PC-9 (cell line): ENCODE measurements at regions of chr1 and their contacts with region 1.

Region 1: DNA sequence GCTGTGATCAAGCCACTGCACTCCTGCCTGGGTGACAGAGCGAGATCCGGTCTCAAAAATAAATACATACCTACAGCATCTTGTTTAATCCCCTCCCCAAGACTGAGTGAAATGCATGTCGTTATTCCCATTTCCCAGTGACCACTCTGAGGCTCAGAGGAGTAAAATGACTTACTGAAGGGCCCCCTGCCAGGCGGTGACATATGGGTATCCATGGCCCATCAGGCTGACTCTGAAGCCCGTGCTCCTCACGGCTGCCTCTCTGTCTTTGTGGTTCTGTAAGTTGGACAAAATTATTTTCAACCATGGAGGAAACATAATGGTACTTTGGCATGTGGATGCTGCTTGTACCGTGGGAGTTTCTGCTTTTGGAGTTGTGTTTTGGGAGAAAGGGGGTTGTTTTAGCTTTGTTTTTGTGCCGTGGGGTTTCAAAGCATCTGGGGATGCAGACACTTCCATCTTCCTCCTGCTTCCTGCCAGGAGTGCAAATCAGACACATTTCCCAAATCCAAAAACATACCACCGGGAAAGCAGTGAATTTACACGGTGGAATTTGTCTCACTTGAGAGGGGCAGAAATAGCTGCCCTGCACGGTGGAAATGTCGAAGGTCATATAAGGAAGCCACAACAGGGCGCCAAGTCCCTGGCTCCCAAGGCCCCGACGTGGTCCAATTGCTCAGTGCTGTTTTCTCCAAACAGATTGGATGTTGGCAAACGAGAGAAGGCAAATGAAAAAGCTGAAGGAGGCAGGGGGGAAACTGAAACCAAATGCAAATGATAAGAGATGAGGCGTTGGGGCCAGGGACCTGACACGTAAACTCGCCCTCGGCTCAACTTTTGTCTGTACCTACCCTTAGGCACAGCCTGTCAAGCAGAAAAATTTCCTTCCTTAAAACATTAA is 17.1 kb upstream of the PINK1 start:
- DNase-seq: no peak
- H3K4me3 ChIP-seq: no peak overlapping the region
- H3K27ac ChIP-seq: no peak overlapping the region
- H3K4me1 ChIP-seq: peaks cover 29% of the 10 kb centered on the region
- H3K27me3 ChIP-seq: no peaks in the 10 kb centered on the region
- CTCF ChIP-seq: no peak

Region 2: GRCh38 chr1:20361806-20362640 is 254.2 kb before region 1 on chr1:
- CTCF ChIA-PET with region 1: no interaction called
- POLR2A ChIA-PET with region 1: interaction called, 14 read pairs
- intact Hi-C with region 1: no loop called
- DNase-seq: peak in 1 of 2 experiments; percentile 80
- H3K4me3 ChIP-seq: no peak overlapping the region
- H3K27ac ChIP-seq: no peak overlapping the region
- H3K4me1 ChIP-seq: peaks cover 41% of the 10 kb centered on the region
- H3K27me3 ChIP-seq: no peaks in the 10 kb centered on the region
- CTCF ChIP-seq: peak; percentile 90

Region 3: DNA sequence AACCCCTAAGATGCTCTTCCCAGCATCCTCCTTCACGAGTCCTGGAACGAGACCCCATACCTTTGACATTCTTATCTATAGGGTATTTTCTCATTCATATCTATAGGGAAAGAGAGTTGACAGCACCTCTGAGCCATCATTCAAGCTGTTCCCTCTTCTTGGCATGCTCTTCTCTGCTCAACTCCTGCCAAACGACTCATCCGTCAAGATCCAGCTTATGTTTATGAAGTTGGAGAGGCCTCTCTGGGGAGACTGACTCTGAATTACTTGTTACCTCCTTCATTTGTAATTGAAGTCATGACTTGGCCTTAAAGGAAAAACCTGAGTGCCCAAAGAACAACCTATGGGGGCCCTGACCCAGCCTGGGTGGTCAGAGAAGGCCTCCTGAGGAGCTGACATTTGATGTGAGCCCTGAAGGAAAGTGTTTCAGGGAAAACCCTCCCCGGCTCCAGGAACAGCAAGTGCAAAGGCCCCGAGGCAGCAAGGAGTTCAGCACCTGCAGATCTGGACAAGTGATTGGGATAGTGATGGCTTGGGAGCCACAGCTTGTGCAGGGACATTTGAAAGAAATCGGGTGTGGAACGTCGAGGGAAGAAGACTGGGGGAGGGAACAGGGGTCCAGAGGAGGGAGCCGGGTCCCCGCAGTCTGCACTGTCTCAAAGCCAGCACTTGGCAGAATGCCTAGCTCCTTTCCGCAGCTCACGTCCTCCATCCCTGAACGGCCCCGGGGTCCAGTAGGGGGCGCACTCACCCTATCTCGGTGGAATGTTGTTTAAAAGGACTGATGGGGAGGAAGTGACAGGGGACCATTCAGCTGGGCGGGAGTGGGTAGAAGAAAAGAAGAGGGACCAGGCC is 41.3 kb before region 1 on chr1:
- CTCF ChIA-PET with region 1: interaction called, 4 read pairs
- POLR2A ChIA-PET with region 1: no interaction called
- intact Hi-C with region 1: loop called (anchors 5 kb)
- DNase-seq: no peak
- H3K4me3 ChIP-seq: no peak overlapping the region
- H3K27ac ChIP-seq: no peak overlapping the region
- H3K4me1 ChIP-seq: peaks cover 34% of the 10 kb centered on the region
- H3K27me3 ChIP-seq: no peaks in the 10 kb centered on the region
- CTCF ChIP-seq: peak; percentile 26; the same call in 1 of the 2 replicates

Region 4: DNA sequence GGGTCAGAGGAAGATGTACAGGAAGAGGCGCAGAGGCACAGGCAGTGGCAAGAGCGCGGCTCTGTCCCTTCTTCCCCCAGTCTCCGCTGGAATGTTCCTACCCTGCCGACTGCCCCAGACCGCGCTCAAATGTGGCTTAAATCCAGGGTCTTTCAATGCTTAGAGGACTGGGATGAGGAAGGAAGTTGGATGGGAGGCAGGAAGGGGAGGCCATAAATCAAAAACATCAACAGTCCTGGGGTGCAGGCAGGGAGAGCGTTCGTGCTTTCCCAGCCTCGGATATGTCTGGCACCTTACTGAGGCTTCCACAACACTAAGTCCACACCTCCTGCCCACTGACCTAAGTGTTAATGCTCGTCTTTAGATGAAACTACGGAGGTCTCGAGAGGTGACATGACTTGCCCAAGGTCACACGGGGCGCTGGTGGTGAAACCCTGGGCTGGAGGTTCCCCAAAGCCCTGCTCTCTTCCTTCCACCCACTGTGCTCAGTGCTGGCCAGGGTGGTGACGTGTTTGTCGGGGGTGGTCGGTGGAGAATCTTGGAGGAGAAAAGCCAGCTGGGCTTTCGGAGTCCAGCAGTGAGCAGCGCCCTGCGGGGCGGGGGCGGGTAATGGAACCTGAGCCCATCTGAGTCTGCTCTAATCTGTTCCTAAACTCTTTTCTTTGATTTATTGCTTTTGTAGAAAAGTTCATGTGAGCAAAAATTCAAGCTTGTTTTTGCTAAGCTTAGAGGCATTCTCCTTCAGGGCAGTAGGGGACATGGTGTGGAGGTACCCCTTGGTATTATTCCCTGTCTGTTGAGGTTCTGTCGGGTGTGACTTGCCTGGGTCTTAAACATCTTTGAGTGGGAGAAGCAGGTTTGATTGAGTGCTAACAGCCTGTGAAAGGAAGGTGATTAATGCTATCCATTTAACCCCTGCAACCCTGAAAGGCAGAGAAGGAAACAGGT is 26.6 kb before region 1 on chr1:
- CTCF ChIA-PET with region 1: no interaction called
- POLR2A ChIA-PET with region 1: interaction called, 20 read pairs
- intact Hi-C with region 1: loop called (anchors 1 kb)
- DNase-seq: no peak
- H3K4me3 ChIP-seq: peak overlapping the region; percentile 76
- H3K27ac ChIP-seq: peak overlapping the region; percentile 45
- H3K4me1 ChIP-seq: peaks cover 9% of the 10 kb centered on the region
- H3K27me3 ChIP-seq: no peaks in the 10 kb centered on the region
- CTCF ChIP-seq: no peak

Region 5: DNA sequence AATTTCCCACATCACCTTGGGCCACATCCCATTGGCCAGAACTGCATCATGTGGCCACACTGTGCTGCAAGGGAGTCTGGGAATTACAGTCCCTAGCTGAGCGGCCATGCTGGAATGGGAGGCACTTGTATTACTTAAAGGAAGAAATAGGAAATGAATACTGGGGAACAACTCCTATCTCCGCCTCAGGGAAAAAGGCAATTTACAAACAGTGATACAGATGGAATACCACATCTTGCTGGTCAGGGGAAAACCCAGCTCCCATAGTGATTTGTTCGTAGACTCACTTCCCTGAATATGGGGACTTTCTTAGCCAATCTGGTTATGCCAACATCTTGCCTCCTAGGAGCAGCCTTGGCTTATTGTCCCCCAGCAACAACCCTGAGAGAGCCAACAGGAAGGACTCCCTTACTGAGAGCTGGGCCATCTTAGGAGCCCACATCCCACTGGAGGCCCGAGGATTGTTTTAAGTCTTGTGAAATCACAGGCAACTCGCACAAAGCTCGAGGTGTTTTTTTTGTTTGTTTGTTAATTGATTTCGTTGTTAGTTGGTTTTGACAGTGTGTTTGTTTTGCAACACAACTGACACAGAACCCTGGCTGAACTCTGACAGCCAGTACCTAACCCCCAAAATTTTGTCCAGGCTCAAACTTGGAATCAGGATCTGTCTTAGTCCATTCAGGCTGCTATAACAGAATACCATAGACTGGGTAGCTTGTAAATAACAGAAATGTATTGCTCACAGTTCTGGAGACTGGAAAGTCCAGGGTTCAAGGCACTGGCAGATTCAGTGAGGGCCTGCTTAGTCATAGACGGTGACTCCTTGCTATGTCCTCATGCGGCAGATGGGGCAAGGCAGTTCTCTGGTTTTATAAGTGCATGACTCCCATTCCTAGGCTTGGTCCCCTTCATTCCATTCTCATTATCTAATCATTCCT is 12.4 kb before region 1 on chr1:
- CTCF ChIA-PET with region 1: no interaction called
- POLR2A ChIA-PET with region 1: no interaction called
- intact Hi-C with region 1: loop called (anchors 1 kb)
- DNase-seq: peak in 1 of 2 experiments; percentile 87
- H3K4me3 ChIP-seq: no peak overlapping the region
- H3K27ac ChIP-seq: peak overlapping the region; percentile 88
- H3K4me1 ChIP-seq: peaks cover 54% of the 10 kb centered on the region
- H3K27me3 ChIP-seq: no peaks in the 10 kb centered on the region
- CTCF ChIP-seq: no peak

Region 6: GRCh38 chr1:20633190-20634064 is 17.2 kb after region 1 on chr1 and contains the start of gene PINK1:
- CTCF ChIA-PET with region 1: interaction called, 11 read pairs
- POLR2A ChIA-PET with region 1: interaction called, 8 read pairs
- intact Hi-C with region 1: loop called (anchors 2 kb)
- DNase-seq: peak; percentile 52 to 87
- H3K4me3 ChIP-seq: peak within 1 kb of the TSS; percentile 58
- H3K27ac ChIP-seq: 0 out of 2 replicates have a peak within 1 kb of the TSS, but pooled peaks have one; percentile 26
- H3K4me1 ChIP-seq: peaks cover 19% of the 10 kb centered on the region
- H3K27me3 ChIP-seq: no peaks in the 10 kb centered on the region
- CTCF ChIP-seq: peak; percentile 91
- total RNA-seq, gene PINK1: 46.5 and 48.6 TPM in 2 replicates

Region 7: GRCh38 chr1:20661207-20662109 is 45.3 kb after region 1 on chr1 and contains the start of gene DDOST:
- CTCF ChIA-PET with region 1: no interaction called
- POLR2A ChIA-PET with region 1: interaction called, 12 read pairs
- intact Hi-C with region 1: no loop called
- DNase-seq: peak; percentile 91 to 94
- H3K4me3 ChIP-seq: peak within 1 kb of the TSS; percentile 92
- H3K27ac ChIP-seq: peak within 1 kb of the TSS; percentile 41
- H3K4me1 ChIP-seq: peaks cover 11% of the 10 kb centered on the region
- H3K27me3 ChIP-seq: no peaks in the 10 kb centered on the region
- CTCF ChIP-seq: no peak
- total RNA-seq, gene DDOST: 210 and 251 TPM in 2 replicates

Region 8: GRCh38 chr1:20672265-20672632 is 56.1 kb after region 1 on chr1:
- CTCF ChIA-PET with region 1: no interaction called
- POLR2A ChIA-PET with region 1: no interaction called
- intact Hi-C with region 1: no loop called
- DNase-seq: no peak
- H3K4me3 ChIP-seq: no peak overlapping the region
- H3K27ac ChIP-seq: no peak overlapping the region
- H3K4me1 ChIP-seq: no peaks in the 10 kb centered on the region
- H3K27me3 ChIP-seq: no peaks in the 10 kb centered on the region
- CTCF ChIP-seq: no peak

Region 9: GRCh38 chr1:20775700-20776099 is 159.5 kb after region 1 on chr1:
- CTCF ChIA-PET with region 1: no interaction called
- POLR2A ChIA-PET with region 1: no interaction called
- intact Hi-C with region 1: no loop called
- DNase-seq: no peak
- H3K4me3 ChIP-seq: no peak overlapping the region
- H3K27ac ChIP-seq: no peak overlapping the region
- H3K4me1 ChIP-seq: no peaks in the 10 kb centered on the region
- H3K27me3 ChIP-seq: no peaks in the 10 kb centered on the region
- CTCF ChIP-seq: no peak

Region 10: GRCh38 chr1:21005466-21006239 is 389.5 kb after region 1 on chr1:
- CTCF ChIA-PET with region 1: no interaction called
- POLR2A ChIA-PET with region 1: no interaction called
- intact Hi-C with region 1: no loop called
- DNase-seq: no peak
- H3K4me3 ChIP-seq: no peak overlapping the region
- H3K27ac ChIP-seq: no peak overlapping the region
- H3K4me1 ChIP-seq: no peaks in the 10 kb centered on the region
- H3K27me3 ChIP-seq: no peaks in the 10 kb centered on the region
- CTCF ChIP-seq: no peak